ENCODE measurements at regions of chrX and their contacts with region 1.

Region 1: GRCh38 chrX:119981286-119982070 is 37.9 kb upstream of the NKAP start:
- DNase-seq: peak; percentile 34 to 46
- H3K4me3 ChIP-seq: no peak overlapping the region
- H3K4me3 Mint-ChIP-seq: no peak overlapping the region
- H3K27ac Mint-ChIP-seq: no peak overlapping the region
- H3K4me1 ChIP-seq: peaks cover 6% of the 10 kb centered on the region; the same call in 1 of the 2 replicates
- H3K4me1 Mint-ChIP-seq: peaks cover 16% of the 10 kb centered on the region
- H3K27me3 ChIP-seq: no peaks in the 10 kb centered on the region
- H3K27me3 Mint-ChIP-seq: no peaks in the 10 kb centered on the region
- CTCF ChIP-seq: peak; percentile 38 to 48

Region 2: GRCh38 chrX:119887721-119888425 is 93.6 kb before region 1 on chrX:
- CTCF ChIA-PET with region 1: no interaction called
- POLR2A ChIA-PET with region 1: no interaction called
- intact Hi-C with region 1: no loop called
- DNase-seq: peak; percentile 85 to 86
- H3K4me3 ChIP-seq: peak overlapping the region; percentile 47
- H3K4me3 Mint-ChIP-seq: peak overlapping the region; percentile 66
- H3K27ac Mint-ChIP-seq: no peak overlapping the region
- H3K4me1 ChIP-seq: peaks cover 7% of the 10 kb centered on the region; the same call in 1 of the 2 replicates
- H3K4me1 Mint-ChIP-seq: no peaks in the 10 kb centered on the region
- H3K27me3 ChIP-seq: no peaks in the 10 kb centered on the region
- H3K27me3 Mint-ChIP-seq: no peaks in the 10 kb centered on the region
- CTCF ChIP-seq: peak; percentile 51 to 73

Region 3: GRCh38 chrX:119916310-119916709 is 65.2 kb before region 1 on chrX:
- CTCF ChIA-PET with region 1: no interaction called
- POLR2A ChIA-PET with region 1: no interaction called
- intact Hi-C with region 1: no loop called
- DNase-seq: no peak
- H3K4me3 ChIP-seq: no peak overlapping the region
- H3K4me3 Mint-ChIP-seq: no peak overlapping the region
- H3K27ac Mint-ChIP-seq: no peak overlapping the region
- H3K4me1 ChIP-seq: no peaks in the 10 kb centered on the region
- H3K4me1 Mint-ChIP-seq: no peaks in the 10 kb centered on the region
- H3K27me3 ChIP-seq: no peaks in the 10 kb centered on the region
- H3K27me3 Mint-ChIP-seq: no peaks in the 10 kb centered on the region
- CTCF ChIP-seq: no peak

Region 4: DNA sequence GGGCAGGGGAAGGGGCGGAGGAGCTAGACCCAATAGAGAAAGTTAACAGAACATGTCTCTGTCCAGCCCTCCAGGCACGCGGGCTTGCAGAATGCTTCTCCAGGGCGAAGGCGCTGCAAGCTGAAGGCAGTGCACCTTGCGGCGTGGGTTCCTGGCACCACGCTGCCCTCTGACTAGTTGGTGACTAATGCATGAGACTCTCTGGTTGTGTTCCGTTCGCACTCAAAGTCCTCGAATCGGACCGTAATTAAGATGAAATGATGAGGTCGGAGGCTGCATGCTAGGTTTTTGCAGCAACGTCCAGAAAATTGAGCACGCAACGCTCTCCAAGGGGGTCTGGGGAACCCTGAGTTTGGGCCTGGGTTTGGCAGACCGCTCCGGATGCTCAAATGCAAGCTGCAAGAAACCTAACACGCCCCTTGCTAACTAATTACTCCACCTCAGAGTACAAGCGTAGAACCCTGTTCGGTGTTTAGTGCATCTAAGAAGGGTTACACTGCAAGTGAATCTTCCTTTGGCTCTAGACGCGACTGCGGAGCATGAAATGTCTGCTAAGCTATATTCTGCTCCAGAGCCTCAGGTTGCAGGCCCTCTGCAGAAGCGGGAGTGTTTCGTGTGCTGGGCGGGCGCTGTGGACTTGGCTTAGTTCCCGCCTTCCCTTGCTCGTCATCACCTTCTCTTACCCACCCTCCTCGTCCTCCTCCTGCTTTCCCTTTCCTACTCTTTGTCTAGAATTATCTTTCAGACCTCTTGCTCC is 19.2 kb after region 1 on chrX:
- CTCF ChIA-PET with region 1: no interaction called
- POLR2A ChIA-PET with region 1: no interaction called
- intact Hi-C with region 1: no loop called
- DNase-seq: no peak
- H3K4me3 ChIP-seq: no peak overlapping the region
- H3K4me3 Mint-ChIP-seq: no peak overlapping the region
- H3K27ac Mint-ChIP-seq: no peak overlapping the region
- H3K4me1 ChIP-seq: no peaks in the 10 kb centered on the region
- H3K4me1 Mint-ChIP-seq: no peaks in the 10 kb centered on the region
- H3K27me3 ChIP-seq: no peaks in the 10 kb centered on the region
- H3K27me3 Mint-ChIP-seq: no peaks in the 10 kb centered on the region
- CTCF ChIP-seq: no peak

Region 5: GRCh38 chrX:120021927-120022326 is 40.4 kb after region 1 on chrX:
- CTCF ChIA-PET with region 1: no interaction called
- POLR2A ChIA-PET with region 1: no interaction called
- intact Hi-C with region 1: loop called (anchors 1 kb)
- DNase-seq: peak; percentile 51 to 63
- H3K4me3 ChIP-seq: no peak overlapping the region
- H3K4me3 Mint-ChIP-seq: no peak overlapping the region
- H3K27ac Mint-ChIP-seq: no peak overlapping the region
- H3K4me1 ChIP-seq: peaks cover 10% of the 10 kb centered on the region; the same call in 1 of the 2 replicates
- H3K4me1 Mint-ChIP-seq: no peaks in the 10 kb centered on the region
- H3K27me3 ChIP-seq: no peaks in the 10 kb centered on the region
- H3K27me3 Mint-ChIP-seq: no peaks in the 10 kb centered on the region
- CTCF ChIP-seq: no peak

Region 6: GRCh38 chrX:120213436-120214265 is 232.2 kb after region 1 on chrX:
- CTCF ChIA-PET with region 1: no interaction called
- POLR2A ChIA-PET with region 1: no interaction called
- intact Hi-C with region 1: loop called (anchors 1 kb)
- DNase-seq: peak; percentile 52
- H3K4me3 ChIP-seq: no peak overlapping the region
- H3K4me3 Mint-ChIP-seq: peak overlapping the region; percentile 40
- H3K27ac Mint-ChIP-seq: no peak overlapping the region
- H3K4me1 ChIP-seq: no peaks in the 10 kb centered on the region
- H3K4me1 Mint-ChIP-seq: peaks cover 7% of the 10 kb centered on the region
- H3K27me3 ChIP-seq: no peaks in the 10 kb centered on the region
- H3K27me3 Mint-ChIP-seq: peaks cover 6% of the 10 kb centered on the region
- CTCF ChIP-seq: peak; percentile 45 to 68

Region 7: GRCh38 chrX:120250522-120251271 is 269.2 kb after region 1 on chrX and contains the start of gene ZBTB33:
- CTCF ChIA-PET with region 1: no interaction called
- POLR2A ChIA-PET with region 1: no interaction called
- intact Hi-C with region 1: loop called (anchors 5 kb)
- DNase-seq: peak; percentile 89 to 91
- H3K4me3 ChIP-seq: peak within 1 kb of the TSS; percentile 71
- H3K4me3 Mint-ChIP-seq: peak within 1 kb of the TSS; percentile 97
- H3K27ac Mint-ChIP-seq: peak within 1 kb of the TSS; percentile 99
- H3K4me1 ChIP-seq: no peaks in the 10 kb centered on the region
- H3K4me1 Mint-ChIP-seq: no peaks in the 10 kb centered on the region
- H3K27me3 ChIP-seq: no peaks in the 10 kb centered on the region
- H3K27me3 Mint-ChIP-seq: no peaks in the 10 kb centered on the region
- CTCF ChIP-seq: peak in 1 of 2 experiments; percentile 74
- total RNA-seq, gene ZBTB33: 16.5 and 17.2 TPM in 2 replicates

Region 8: DNA sequence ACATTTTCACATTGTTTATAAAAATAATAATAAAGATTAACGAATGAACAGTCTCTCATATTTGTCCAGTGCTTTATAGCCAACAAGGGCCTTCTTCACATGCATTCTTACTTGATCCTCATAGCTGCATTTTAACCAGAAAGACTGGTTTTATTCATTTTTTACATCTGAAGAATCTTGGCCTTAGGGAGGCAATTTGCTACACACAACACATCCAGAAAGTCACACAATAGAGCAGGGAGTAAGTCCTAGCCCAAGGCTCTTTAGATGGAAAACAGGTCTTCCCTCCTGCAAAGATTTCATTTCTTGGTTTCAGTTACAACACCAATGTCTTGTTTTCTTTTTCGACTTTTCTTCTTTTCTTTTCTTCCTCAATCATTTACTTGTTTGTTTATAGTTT is 661.4 kb after region 1 on chrX:
- CTCF ChIA-PET with region 1: no interaction called
- POLR2A ChIA-PET with region 1: no interaction called
- intact Hi-C with region 1: no loop called
- DNase-seq: no peak
- H3K4me3 ChIP-seq: no peak overlapping the region
- H3K4me3 Mint-ChIP-seq: no peak overlapping the region
- H3K27ac Mint-ChIP-seq: no peak overlapping the region
- H3K4me1 ChIP-seq: no peaks in the 10 kb centered on the region
- H3K4me1 Mint-ChIP-seq: no peaks in the 10 kb centered on the region
- H3K27me3 ChIP-seq: no peaks in the 10 kb centered on the region
- H3K27me3 Mint-ChIP-seq: no peaks in the 10 kb centered on the region
- CTCF ChIP-seq: no peak